Calu3 (cell line): ENCODE measurements at regions of chr6 and their contacts with region 1.

Region 1: GRCh38 chr6:32947552-32948465 is 5.1 kb downstream of the HLA-DMA start:
- DNase-seq: peak; percentile 81
- H3K4me3 Mint-ChIP-seq: no peak overlapping the region
- H3K27ac Mint-ChIP-seq: no peak overlapping the region
- H3K4me1 Mint-ChIP-seq: peaks cover 31% of the 10 kb centered on the region
- H3K27me3 Mint-ChIP-seq: no peaks in the 10 kb centered on the region
- CTCF ChIP-seq: peak; percentile 96

Region 2: DNA sequence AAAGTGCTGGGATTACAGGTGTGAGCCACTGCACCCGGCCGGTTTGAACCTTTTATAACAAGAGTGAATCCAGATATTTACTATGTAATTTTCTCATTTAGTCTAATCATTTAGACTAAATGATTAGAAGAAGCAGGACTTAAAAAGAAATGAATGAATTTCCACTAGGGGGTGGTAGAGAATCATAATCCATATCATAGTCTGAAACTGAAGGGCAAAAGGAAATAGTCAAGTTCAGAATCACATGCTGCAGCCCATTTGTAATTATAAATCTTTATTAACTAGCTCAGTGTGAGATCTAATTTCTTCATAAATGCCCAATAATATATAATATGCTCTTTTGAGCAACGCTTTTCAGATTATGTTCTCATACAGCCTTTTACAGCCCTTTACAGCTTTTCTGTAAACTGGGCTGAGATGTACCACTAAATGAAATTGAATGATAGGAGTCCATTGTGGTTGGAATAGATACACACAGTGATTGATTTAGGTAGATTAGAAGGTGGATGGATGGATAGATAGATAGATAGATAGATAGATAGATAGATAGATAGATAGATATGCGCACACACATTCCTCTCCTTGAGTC is 62.0 kb before region 1 on chr6:
- CTCF ChIA-PET with region 1: interaction called, 38 read pairs
- intact Hi-C with region 1: loop called (anchors 1 kb)
- DNase-seq: no peak
- H3K4me3 Mint-ChIP-seq: no peak overlapping the region
- H3K27ac Mint-ChIP-seq: no peak overlapping the region
- H3K4me1 Mint-ChIP-seq: peaks cover 23% of the 10 kb centered on the region
- H3K27me3 Mint-ChIP-seq: no peaks in the 10 kb centered on the region
- CTCF ChIP-seq: peak; percentile 64